ENCODE measurements at regions of chr2 and their contacts with region 1.

Region 1: DNA sequence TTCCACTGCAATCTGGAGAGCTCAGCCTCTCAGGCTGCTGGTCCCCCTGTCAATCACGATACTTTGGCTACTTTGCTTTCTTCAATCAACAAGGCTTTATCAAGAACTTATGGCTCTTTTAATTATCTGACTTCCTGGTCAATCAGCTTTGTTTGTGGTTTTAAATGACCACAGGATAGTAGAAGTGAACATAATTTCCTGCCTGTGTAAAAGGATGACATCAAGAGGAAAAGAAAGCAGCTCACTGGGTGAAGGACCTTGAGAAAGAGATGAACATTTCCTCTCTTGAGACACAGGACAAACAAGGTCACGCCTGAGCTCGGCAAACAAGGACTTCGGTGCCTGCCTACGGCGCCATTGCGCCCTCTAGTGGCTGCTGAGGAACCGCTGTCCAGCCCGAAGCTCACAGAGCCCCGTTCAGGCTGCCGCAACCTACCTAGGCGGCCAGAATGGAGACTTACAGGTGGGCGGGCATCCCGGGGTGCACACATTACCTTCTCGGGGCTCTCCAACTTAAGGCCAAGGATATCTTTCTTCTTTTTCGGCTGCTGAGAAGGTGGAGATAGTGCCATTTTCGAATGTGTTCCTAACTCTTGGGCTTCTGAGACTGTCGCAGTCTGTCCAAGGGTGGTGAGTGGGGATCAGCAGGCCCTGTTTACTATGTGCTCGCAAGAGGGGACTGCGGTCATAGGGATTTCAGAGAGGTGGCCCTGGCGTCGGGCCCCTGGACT is 54.0 kb downstream of the IL1RL2 start:
- DNase-seq: peak; percentile 80
- ATAC-seq: peak; percentile 99
- H3K4me3 ChIP-seq: no peak overlapping the region
- H3K27ac ChIP-seq: no peak overlapping the region
- H3K4me1 ChIP-seq: peaks cover 0 to 15% of the 10 kb centered on the region in 2 experiments; a peak in 3 of 4 replicates
- H3K27me3 ChIP-seq: no peaks in the 10 kb centered on the region
- CTCF ChIP-seq: peak; percentile 90 to 98 (median 96)
- POLR2A ChIP-seq: no peak
- RAD21 ChIP-seq: peak; percentile 95

Region 2: DNA sequence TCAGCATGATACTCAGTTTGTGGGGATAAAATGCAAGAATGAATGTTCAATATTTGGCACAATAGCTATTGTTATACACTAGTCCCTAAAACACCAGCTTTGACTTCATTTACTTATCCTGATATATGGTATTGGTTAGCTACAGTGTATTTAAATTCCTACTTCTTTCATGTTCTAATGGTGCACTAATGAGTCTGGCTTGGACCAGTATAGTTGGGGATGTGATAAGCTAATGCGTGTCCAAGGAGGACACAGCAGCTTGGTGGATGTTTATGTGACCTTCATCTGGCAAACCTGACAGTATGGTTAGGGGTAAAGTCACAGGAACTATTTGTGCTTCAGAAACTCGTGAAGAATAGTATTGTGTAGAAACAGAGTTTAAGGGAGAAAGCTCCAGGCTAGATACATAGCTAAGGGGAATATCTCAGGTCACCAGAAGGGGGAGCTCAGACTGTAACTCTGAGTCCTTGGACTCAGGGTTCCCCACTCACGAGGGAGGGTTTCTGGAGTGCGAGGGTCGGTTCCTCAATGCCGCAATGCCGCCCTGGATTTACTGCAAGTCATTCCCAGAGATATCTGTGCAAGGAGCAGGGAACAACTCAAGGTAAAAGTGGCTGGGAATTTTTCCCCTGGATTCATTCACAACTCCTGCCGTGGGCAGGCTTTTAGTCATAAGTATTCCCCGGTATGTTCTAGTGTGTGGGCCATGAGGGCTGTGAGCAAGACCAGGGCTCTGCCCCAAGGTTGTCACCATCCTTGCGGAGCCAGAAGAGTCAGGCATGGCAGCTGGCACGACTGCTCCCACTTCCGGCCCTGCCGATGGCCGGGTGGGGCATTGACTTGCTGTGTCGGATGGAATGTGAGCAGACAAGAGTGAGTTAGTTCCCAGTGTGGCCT is 234.6 kb before region 1 on chr2:
- CTCF ChIA-PET with region 1: interaction called, 60 read pairs
- POLR2A ChIA-PET with region 1: interaction called, 3 read pairs
- RAD21 ChIA-PET with region 1: interaction called in 1 of 2 experiments, 5 read pairs
- intact Hi-C with region 1: loop called (anchors 2 kb)
- DNase-seq: peak; percentile 44
- ATAC-seq: peak; percentile 96
- H3K4me3 ChIP-seq: no peak overlapping the region
- H3K27ac ChIP-seq: no peak overlapping the region
- H3K4me1 ChIP-seq: 0 out of 4 replicates have a peak, but pooled peaks cover 0 to 4% of the 10 kb centered on the region in 2 experiments
- H3K27me3 ChIP-seq: no peaks in the 10 kb centered on the region
- CTCF ChIP-seq: peak; percentile 54 to 84 (median 73); a peak in 5 of 6 replicates
- POLR2A ChIP-seq: no peak
- RAD21 ChIP-seq: peak; percentile 62

Region 3: GRCh38 chr2:102166189-102166845 is 74.5 kb before region 1 on chr2:
- CTCF ChIA-PET with region 1: interaction called, 16 read pairs
- POLR2A ChIA-PET with region 1: no interaction called
- RAD21 ChIA-PET with region 1: interaction called in 1 of 2 experiments, 3 read pairs
- intact Hi-C with region 1: no loop called
- DNase-seq: no peak
- ATAC-seq: peak; percentile 67; the same call in 1 of the 2 replicates
- H3K4me3 ChIP-seq: no peak overlapping the region
- H3K27ac ChIP-seq: no peak overlapping the region
- H3K4me1 ChIP-seq: peaks cover 9 to 12% of the 10 kb centered on the region in 2 experiments
- H3K27me3 ChIP-seq: no peaks in the 10 kb centered on the region
- CTCF ChIP-seq: peak; percentile 40 to 68 (median 47); a peak in 4 of 6 replicates
- POLR2A ChIP-seq: no peak
- RAD21 ChIP-seq: peak; percentile 77

Region 4: GRCh38 chr2:102442967-102443828 is 202.4 kb after region 1 on chr2:
- CTCF ChIA-PET with region 1: interaction called, 17 read pairs
- POLR2A ChIA-PET with region 1: no interaction called
- RAD21 ChIA-PET with region 1: interaction called in 1 of 2 experiments, 4 read pairs
- intact Hi-C with region 1: no loop called
- DNase-seq: peak; percentile 18
- ATAC-seq: peak; percentile 73
- H3K4me3 ChIP-seq: no peak overlapping the region
- H3K27ac ChIP-seq: no peak overlapping the region
- H3K4me1 ChIP-seq: no peaks in the 10 kb centered on the region; a peak in 1 of 4 replicates
- H3K27me3 ChIP-seq: no peaks in the 10 kb centered on the region
- CTCF ChIP-seq: peak; percentile 60 to 76 (median 67); a peak in 5 of 6 replicates
- POLR2A ChIP-seq: no peak
- RAD21 ChIP-seq: peak; percentile 73